ENCODE measurements at regions of chr10 and their contacts with region 1.

Region 1: DNA sequence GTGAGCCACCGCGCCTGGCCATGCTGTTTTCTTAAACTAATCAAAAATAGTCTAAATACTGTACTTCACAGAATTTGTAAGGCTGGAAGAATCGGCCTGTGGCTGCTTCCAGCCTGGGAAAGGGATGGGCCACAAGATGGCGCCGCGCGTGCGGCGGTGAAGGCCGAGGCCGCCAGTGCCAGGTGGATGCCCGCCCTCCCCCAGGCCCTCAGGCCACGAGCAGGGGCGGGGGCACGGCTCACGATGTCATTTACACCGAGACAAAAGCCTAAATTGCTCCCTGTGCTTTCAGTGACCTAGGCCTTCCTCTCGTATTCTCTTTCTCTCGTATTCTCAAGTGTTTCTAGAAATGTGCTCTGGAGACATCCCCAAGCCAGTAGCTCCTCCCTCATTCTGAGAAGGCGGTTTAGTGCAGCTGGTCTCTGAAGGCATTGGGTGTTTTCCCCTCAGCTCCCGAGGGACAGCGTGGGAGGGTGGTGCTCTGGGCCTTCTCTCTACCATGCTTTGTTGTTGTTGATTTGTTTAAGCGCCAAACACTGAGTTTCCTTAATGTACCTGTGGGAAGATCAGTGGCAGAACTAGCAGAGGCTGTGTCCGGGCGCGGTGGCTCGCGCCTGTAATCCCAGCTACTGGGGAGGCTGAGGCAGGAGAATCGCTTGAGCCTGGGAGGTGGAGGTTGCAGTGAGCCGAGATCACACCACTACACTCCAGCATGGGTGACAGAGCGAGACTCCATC is 68.4 kb downstream of the CDC123 start:
- DNase-seq: peak; percentile 90
- CTCF ChIP-seq: peak; percentile 92

Region 2: DNA sequence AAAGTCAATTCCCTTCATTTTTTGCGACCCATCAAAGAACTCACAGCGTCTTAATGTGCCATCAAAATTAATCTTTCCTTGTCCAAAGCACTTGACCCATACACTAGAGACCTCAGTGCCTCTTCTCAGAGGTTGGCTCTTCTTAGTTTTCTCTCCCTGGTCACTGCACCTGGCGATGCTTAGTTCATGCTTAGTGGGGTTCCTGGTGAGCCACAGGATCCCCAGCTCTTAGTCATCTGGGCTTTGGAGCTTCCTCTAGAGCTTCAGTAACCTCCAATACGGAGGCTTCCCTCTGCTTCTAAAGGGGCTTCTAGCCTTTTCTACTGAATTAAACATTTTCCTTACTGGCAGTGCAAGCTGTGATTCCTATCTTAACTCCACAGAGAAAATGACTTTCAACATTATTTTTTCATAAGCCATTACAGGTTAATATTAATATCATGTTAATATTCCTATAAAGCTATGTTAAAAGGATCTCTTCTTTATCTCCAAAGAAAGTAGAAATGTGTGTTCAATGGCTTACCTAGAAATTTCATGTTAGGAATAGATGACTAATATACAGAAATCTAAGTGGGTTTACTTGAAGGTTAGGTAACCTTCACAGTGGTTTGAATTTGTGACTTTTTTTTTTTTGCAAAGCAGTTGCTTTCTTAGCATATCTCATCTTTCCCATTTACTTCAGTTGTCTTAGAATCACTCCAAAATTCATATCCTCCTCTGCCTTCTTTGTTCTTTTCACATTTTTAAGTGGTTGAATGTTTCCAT is 380.2 kb after region 1 on chr10:
- in situ Hi-C with region 1: loop called (anchors 10 kb)
- DNase-seq: peak; percentile 56
- CTCF ChIP-seq: no peak

Region 3: DNA sequence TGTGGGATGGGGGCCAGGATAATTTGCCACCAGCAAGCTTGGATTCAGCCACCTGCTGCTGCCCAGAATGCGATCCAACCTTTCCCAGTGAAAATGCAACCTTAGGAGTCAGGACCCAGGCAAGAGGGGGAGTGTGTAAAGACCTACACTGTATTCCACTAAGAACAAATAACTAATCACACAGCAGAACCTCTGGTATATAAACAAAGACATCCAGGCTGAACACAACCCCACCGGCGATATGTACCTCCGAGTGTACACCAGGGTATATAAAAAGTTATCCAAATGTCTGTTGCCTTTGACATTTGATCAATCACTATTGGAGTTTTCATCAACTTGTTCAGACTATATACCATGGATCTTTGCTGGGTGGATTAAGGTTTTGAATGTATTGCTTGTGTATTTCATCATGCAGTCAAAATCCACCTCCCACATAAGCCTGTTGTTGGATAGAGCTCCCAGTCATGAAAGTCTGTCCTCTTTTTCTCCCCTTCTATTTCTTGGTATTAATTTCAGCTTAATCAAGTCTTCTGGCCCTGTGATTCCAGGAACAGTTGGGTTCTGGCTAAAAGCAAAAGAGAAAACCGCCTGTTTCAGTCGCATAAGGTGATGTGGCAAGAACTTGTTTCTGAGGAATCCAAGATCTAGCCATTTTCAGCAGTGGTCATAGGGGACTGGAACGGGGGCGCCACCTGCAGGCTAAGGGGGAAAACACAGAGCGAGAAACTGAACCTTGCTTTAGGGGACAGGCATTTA is 446.4 kb after region 1 on chr10:
- in situ Hi-C with region 1: loop called (anchors 25 kb)
- DNase-seq: peak; percentile 73
- CTCF ChIP-seq: peak; percentile 92

Region 4: DNA sequence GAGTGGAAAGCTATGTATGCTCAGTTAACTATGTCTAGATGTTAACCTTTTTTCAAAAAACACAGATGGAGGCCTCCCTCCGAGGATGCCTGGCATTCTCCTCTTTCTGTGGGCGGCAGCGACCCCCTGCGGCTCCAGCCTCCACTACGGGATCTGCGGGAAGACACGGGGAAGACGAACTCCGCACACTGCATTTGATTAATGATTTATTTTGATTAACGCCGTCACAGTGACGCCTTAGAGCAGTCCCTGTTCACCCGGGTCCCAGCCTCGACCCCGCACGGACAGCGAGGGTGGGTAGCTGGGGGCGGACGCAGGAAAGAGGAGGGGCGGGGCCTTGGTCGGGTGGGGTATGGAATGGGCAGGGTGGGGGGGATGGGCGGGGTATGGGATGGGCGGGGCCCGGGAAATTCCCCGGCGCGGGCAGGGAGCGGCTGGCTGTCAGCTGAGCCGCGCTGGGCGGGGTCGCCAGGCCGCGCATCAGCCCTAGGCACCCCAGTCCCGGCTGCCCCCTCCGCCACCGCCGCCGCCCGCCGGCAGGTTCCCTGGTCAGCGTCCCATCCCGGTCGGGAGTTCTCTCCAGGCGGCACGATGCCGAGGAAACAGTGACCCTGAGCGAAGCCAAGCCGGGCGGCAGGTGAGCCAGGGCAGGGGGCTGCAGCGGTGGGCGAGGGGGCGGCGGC is 835.4 kb after region 1 on chr10 and contains the start of gene OPTN:
- in situ Hi-C with region 1: loop called (anchors 25 kb)
- DNase-seq: peak; percentile 90
- CTCF ChIP-seq: peak; percentile 76

Measured in GM13977 (cell line).